Mammary epithelial cell (primary cell): ENCODE measurements at regions of chr10 and their contacts with region 1.

Region 1: DNA sequence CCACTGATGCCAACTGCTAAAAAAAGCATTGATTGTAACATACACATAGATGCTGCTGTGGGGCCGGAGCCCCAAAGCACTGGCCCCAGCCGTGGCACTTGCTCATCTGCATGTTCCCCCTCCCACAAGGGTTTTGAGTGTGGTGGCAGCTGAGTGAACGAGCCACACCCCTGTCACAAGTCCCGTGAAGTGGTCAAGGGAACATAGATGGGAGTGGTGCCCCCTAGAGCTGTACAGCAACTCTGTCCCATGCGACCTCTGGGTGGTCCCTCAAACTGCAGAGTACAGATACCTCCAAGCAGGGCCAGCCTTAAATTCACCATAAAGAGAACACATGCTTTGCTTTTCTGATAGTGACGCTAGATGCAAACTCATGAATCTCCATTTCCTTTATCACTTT is 503.3 kb upstream of the NRP1 start:
- DNase-seq: no peak
- H3K4me3 ChIP-seq: no peak overlapping the region
- H3K27ac ChIP-seq: no peak overlapping the region
- H3K4me1 ChIP-seq: no peaks in the 10 kb centered on the region
- H3K27me3 ChIP-seq: no peaks in the 10 kb centered on the region
- CTCF ChIP-seq: no peak

Region 2: DNA sequence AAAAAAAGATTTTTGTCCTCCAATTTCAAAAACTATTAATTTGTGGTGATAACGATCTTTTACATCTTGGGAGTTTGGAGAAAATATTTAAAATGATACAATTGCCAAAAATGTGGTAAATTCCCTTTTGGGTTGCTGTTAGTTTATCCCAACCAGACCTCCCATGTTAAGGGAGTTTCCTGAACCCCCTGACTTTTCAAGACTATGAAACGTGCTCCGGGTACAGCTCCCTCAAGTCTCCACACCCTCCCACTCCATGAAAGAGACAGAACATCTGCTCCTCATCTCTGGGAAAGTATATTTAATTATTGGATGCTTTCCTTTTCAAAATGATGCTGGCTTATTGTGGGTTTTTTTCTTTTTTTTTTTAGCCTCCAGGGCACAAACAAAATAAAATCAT is 31.3 kb after region 1 on chr10:
- CTCF ChIA-PET with region 1: interaction called, 10 read pairs
- dilution Hi-C with region 1: no loop called
- in situ Hi-C with region 1: no loop called
- intact Hi-C with region 1: no loop called
- DNase-seq: no peak
- H3K4me3 ChIP-seq: no peak overlapping the region
- H3K27ac ChIP-seq: no peak overlapping the region
- H3K4me1 ChIP-seq: no peaks in the 10 kb centered on the region
- H3K27me3 ChIP-seq: no peaks in the 10 kb centered on the region
- CTCF ChIP-seq: no peak

Region 3: DNA sequence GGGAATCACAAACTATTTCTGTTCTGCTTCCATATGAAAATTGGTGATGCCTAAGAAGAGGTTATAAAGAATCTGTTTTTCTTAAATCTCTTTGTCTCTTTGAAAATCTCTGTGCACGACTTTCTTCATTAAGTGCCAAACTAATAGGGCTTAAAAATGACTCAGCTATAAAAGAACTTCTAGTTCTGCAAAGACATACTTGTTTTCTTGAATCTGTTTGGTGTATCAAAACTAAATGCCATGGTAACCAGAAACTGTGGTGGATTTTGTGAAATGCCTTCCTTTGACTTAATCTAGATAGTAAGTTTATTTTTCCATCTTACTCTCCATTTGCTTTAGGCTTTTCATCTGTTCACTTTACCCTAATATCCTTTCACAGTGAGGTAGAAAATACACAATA is 559.6 kb after region 1 on chr10:
- CTCF ChIA-PET with region 1: no interaction called
- dilution Hi-C with region 1: no loop called
- in situ Hi-C with region 1: no loop called
- intact Hi-C with region 1: no loop called
- DNase-seq: peak; percentile 8
- H3K4me3 ChIP-seq: no peak overlapping the region
- H3K27ac ChIP-seq: no peak overlapping the region
- H3K4me1 ChIP-seq: peaks cover 4% of the 10 kb centered on the region
- H3K27me3 ChIP-seq: no peaks in the 10 kb centered on the region
- CTCF ChIP-seq: no peak